Sciatic nerve (tissue), 2 donors: ENCODE measurements at regions of chr18 and their contacts with region 1.

Region 1: DNA sequence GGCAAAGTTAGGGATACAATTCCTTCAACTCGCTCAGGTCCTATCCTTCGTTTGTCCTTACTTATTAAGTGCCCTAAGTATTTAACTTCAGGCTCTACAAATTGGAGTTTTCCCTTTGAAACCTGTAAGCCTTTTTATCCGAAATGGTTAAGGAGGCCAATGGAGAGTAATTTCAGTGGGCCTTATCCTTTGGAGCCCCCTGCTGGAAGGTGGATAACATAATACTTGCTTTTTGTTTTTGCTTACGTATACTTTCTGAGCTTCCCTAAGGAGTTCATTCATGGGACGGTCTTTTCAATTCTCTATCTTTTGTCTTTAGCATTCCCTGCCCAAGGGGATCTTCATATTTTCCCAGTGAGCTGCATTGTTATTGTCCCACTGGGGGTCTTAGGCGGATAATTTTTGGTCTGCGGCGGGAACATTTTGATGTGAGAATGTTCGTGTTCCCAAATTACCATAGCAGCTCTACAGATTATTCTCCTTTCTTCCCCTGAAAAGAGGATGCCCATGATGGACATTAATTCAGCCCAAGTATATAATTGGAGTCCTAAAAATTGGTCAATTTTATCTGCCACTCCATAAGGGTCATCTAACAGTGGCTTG is 34.4 kb upstream of the TRAPPC8 start:
- DNase-seq: no peak
- ATAC-seq: peak; percentile 50

Region 2: DNA sequence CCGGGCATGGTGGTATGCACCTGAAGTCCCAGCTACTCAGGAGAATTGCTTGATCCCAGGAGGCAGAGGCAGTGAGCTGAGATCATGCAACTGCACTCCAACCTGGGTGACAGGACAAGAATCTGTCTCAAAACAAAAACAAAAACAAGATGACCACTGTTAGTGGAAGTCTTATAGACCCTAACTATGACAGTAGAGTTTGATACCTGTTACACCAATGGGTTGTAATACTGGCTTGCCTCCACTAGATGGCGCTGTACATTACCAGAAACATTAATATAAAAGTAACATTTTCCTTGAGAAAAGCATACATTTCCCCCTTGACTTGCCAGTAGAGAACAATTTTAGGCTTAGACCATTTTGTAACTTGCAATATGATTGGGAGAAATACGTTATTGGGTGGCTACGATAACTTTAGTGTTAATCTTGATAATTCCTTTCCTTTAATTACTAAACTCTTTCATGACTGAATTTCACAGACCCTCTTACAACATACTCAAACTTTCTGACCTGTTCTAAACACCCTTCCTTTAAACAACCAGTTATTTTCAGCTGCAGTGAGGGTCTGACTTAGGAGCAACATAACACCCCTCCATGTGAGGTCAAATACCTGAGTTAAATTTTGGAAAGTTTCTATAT is 236.2 kb before region 1 on chr18:
- intact Hi-C with region 1: loop called (anchors 5 kb)
- DNase-seq: peak; percentile 65
- ATAC-seq: peak; percentile 30

Region 3: DNA sequence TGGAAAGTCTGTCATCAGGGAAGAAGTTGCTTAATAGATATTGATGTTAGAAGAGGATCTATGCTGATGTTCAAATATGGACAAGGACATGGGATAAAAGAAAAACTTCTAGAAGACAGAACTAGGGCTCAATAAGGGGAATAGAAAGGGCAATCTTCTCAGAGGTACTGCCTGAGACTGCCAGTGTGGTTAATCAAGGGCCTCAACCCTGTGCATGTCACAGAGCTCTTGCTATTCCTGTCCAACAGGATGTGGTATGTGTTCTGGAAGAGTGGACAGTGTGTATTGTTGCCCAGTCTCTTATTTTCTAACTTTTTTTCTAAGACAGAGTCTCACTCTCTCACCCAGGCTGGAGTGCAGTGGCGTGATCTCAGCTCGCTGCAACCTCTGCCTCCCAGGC is 13.5 kb after region 1 on chr18:
- intact Hi-C with region 1: no loop called
- DNase-seq: no peak
- ATAC-seq: no peak